ENCODE measurements at regions of chr11 and their contacts with region 1.

Region 1: DNA sequence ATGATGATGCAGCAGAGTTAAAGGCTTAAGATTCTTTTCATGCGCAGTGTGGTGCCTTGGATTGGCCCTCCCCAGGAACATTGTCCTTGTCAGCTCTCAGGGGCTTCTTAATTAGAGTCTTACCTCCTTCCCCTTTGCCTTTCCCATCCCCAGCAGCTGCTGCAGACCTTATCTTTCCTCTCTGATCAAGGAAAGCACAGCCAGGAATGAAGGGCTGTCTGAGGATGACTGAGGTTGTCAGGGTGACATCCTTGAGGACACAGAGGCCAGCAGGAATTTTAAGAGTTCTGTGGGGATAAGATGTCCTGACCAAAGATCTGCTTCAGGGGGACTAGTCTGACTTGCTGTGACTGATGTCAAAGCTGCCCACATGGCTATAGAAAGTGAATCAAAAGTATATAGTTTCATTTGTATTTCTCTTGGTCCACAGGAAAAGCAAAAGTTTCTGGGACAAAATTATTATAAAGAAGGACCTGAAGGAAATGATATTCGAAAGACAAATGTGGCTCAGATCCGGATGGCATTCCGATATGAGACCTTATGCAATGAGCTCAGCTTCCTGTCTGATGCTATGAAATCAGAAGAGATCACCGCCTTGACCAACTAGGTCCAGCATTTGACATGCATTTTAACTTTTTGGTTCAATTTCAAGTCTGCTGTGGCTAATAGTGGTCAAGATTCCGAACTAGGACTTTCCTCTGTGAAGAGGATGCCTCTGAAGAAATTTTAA is 35.5 kb downstream of the RNF141 start:
- DNase-seq: no peak
- H3K4me3 ChIP-seq: no peak overlapping the region
- CTCF ChIP-seq: no peak
- POLR2A ChIP-seq: no peak

Region 2: DNA sequence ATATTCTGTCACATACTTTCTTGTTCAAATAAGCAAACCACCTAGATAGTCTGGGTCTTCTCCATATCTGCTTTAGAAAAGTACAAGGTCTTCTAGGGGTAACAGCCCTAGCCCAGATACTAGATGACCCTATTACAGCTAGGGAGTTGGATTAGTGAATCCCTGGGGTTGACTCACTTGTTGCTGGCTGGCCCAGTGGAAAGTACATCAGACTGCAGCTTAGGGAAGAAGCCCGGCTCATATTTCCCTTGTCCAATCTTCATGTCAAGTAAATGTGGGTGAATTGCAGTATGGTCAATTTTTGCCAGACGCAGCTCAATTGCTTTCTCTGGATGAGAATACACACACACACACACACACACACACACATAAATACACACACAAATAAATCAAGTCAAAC is 1335.0 kb before region 1 on chr11:
- intact Hi-C with region 1: loop called (anchors 5 kb)
- DNase-seq: no peak
- H3K4me3 ChIP-seq: no peak overlapping the region
- CTCF ChIP-seq: no peak
- POLR2A ChIP-seq: no peak

Region 3: DNA sequence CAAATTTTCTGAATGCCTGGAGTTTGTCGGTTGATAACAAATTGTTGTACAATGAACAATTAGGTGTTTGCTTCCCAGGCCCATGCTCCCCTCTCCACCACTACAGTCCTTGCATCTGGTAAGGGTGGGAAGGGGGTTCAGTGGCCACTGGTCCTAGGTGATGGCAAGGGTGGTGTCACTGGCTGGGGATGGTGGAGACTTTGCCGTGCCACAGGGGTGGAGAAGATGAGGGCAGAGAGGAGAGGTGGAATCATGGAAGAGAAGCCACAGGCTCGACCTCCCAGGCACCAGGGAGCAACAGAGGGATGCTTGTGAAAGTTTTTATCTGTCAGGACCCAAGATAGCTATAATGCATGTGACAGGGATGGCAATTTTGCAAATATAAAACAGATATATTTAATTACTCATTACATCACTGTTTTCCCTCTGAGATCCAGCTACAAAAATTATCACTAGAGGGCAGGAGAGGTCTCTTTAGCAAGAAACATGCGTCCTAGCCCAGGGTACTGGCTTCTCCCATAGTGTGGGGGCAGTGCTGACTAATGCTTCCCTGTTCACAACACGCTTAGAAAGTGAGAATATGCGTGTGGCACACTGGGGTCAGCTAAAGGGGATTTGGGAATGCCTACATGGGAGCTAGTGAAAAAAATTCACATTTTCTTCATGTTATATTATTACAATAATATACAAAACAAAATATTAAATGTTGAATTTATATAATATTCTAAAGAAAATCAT is 99.4 kb before region 1 on chr11:
- intact Hi-C with region 1: no loop called
- DNase-seq: peak; percentile 79 to 86
- H3K4me3 ChIP-seq: no peak overlapping the region
- CTCF ChIP-seq: no peak
- POLR2A ChIP-seq: no peak

Region 4: DNA sequence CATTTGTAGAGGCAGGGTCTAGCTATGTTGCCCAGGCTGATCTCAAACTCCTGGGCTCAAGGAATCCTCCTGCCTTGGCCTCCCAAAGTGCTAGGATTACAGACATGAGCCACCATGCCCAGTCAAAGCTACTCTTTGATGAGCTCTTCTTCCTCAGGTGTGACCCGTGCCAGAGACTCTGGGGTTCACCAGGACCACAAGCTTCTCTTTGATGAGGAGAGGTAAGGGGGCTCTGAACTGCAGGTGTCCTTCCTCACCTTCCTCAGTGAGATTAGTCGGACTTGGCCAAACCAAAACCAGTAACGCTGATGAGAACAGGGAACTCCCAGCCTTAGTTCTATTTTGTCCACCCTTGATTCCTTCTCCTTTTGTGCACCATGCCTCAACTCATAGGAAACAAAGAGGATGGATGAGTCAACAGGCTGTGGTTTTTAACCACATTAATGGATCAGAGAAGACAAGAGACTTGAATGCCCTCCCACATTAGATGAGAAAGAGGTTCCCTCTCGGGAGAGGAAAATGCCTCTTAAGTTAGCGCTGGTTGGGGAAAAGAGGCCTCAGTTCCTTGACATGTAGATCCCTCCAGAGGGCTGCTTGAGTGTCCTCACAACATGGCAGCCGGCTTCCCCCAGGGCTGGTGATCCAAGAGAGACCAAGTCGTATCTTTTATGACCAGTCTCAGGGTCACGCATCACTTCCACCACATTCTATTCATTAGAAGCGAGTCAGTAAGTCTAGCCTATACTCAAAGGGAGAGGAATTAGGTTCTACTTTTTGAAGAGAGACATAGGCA is 219.9 kb after region 1 on chr11:
- intact Hi-C with region 1: no loop called
- DNase-seq: no peak
- H3K4me3 ChIP-seq: no peak overlapping the region
- CTCF ChIP-seq: no peak
- POLR2A ChIP-seq: no peak

Measured in lower leg skin (tissue), 4 donors.